Activated CD8-positive, alpha-beta memory T cell treated with anti-CD3 and anti-CD28 coated beads, Interleukin-2, amount 10 ng/mL, durations not matched to agents 7 days and 5 days (primary cell): ENCODE measurements at regions of chr2 and their contacts with region 1.

Region 1: DNA sequence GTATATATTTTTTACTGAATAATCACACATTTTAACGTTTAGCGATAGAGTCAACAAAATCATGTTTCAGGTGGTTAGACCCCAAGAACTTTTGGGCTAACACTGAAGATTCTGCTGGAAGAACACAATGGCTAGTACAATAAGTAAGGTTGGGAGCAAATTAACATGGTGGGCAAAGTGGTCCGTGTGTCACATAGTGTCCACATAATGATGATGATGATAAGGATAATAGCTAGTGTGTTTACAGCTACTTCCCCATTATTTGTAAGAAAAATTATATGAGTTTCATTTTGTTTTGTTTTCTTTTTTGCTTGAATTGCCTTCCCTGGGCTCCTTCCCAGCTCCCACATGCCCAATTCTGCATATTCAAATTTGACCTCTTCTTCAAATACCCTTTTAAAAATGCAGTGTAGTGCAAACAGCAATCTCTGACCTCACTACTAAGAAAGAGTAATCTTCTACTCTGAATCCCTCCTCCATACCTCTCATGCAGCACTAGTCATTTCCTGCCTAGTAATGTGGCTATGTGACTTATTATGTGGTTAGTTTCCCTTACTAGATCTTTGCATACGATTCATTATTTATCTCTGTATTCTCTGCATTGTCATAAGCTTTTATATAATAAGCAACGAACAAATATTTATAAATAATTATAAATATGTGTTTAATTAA is 16.9 kb upstream of the VPS54 start:
- DNase-seq: peak; percentile 58
- ATAC-seq: peak; percentile 92
- H3K4me3 Mint-ChIP-seq: peak overlapping the region; percentile 62
- H3K27ac Mint-ChIP-seq: peak overlapping the region; percentile 94
- H3K4me1 Mint-ChIP-seq: peaks cover 50% of the 10 kb centered on the region
- H3K27me3 Mint-ChIP-seq: no peaks in the 10 kb centered on the region

Region 2: GRCh38 chr2:64019719-64020528 is 16.2 kb before region 1 on chr2:
- CTCF ChIA-PET with region 1: interaction called, 36 read pairs
- DNase-seq: peak; percentile 46
- ATAC-seq: peak; percentile 1
- H3K4me3 Mint-ChIP-seq: peak overlapping the region; percentile 96
- H3K27ac Mint-ChIP-seq: peak overlapping the region; percentile 96
- H3K4me1 Mint-ChIP-seq: peaks cover 35% of the 10 kb centered on the region
- H3K27me3 Mint-ChIP-seq: no peaks in the 10 kb centered on the region

Region 3: GRCh38 chr2:64052468-64053241 is 16.5 kb after region 1 on chr2:
- CTCF ChIA-PET with region 1: interaction called, 15 read pairs
- DNase-seq: no peak
- ATAC-seq: no peak
- H3K4me3 Mint-ChIP-seq: no peak overlapping the region
- H3K27ac Mint-ChIP-seq: no peak overlapping the region
- H3K4me1 Mint-ChIP-seq: peaks cover 43% of the 10 kb centered on the region
- H3K27me3 Mint-ChIP-seq: peaks cover 3% of the 10 kb centered on the region

Region 4: GRCh38 chr2:64062829-64063228 is 26.7 kb after region 1 on chr2:
- CTCF ChIA-PET with region 1: no interaction called
- DNase-seq: no peak
- ATAC-seq: no peak
- H3K4me3 Mint-ChIP-seq: no peak overlapping the region
- H3K27ac Mint-ChIP-seq: no peak overlapping the region
- H3K4me1 Mint-ChIP-seq: peaks cover 14% of the 10 kb centered on the region
- H3K27me3 Mint-ChIP-seq: no peaks in the 10 kb centered on the region